Activated T-helper 2 cell treated with anti-CD3 and anti-CD28 coated beads, Interferon-gamma antibody, Interleukin-2, Interleukin-4, amounts not matched to agents 10 μg/mL and 5 μg/mL and 100 μg/mL, durations not matched to agents 14 hours and 24 hours and 36 hours (primary cell): ENCODE measurements at regions of chr11 and their contacts with region 1.

Region 1: GRCh38 chr11:17368176-17368950 is 16.8 kb downstream of the NCR3LG1 start:
- DNase-seq: no peak
- H3K4me3 Mint-ChIP-seq: no peak overlapping the region
- H3K27ac Mint-ChIP-seq: peak overlapping the region; percentile 79
- H3K4me1 Mint-ChIP-seq: peaks cover 15% of the 10 kb centered on the region
- H3K27me3 Mint-ChIP-seq: peaks cover 1% of the 10 kb centered on the region

Region 2: GRCh38 chr11:16785520-16786128 is 582.7 kb before region 1 on chr11:
- intact Hi-C with region 1: no loop called
- DNase-seq: peak; percentile 37
- H3K4me3 Mint-ChIP-seq: no peak overlapping the region
- H3K27ac Mint-ChIP-seq: no peak overlapping the region
- H3K4me1 Mint-ChIP-seq: peaks cover 3% of the 10 kb centered on the region
- H3K27me3 Mint-ChIP-seq: no peaks in the 10 kb centered on the region

Region 3: DNA sequence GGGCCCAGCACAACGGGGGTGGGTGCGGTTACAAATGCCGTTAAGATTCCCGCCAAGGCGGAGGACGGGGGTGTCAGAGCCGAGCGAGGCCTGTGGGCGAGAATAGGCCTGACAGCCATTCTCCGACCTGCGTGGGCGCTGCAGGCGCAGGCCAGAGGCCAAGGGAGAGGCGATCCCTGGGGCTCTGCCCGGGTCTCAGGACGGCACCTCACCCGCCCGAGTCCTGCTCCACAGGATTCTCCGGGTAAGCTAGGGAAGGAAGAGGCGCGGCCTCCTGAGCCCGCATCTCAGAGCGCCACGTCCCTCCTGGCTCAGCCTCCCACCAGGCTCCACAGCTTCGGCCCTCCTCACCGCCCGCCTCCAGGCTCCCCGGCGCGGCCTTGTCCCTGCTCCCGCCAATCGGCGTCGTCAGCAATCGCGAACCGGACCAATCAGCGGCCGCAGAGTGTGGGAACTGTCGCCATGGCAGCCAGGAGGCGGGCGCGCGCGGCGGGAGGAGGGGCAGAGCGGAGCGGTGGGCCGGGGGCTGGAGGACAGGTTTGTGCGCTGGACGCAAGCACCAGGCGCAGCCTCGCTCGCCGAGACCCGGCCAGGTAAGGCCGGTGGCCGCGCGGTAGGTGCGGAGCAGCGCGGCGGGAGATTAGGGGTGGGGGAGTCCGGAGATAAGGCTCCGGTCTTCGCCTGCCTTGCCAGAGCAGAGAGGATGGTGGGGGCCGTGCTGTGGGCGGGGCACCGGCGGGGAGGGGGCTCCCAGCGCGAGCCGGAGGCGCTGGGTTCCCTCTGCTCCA is 91.9 kb before region 1 on chr11 and contains the start of gene NUCB2:
- intact Hi-C with region 1: loop called (anchors 5 kb)
- DNase-seq: peak; percentile 95
- H3K4me3 Mint-ChIP-seq: peak within 1 kb of the TSS; percentile 91
- H3K27ac Mint-ChIP-seq: peak within 1 kb of the TSS; percentile 89
- H3K4me1 Mint-ChIP-seq: peaks cover 43% of the 10 kb centered on the region
- H3K27me3 Mint-ChIP-seq: peaks cover 3% of the 10 kb centered on the region
- total RNA-seq, gene NUCB2: 99.4 and 106 TPM in 2 replicates